Posterior vena cava (tissue), 2 donors: ENCODE measurements at regions of chr5 and their contacts with region 1.

Region 1: DNA sequence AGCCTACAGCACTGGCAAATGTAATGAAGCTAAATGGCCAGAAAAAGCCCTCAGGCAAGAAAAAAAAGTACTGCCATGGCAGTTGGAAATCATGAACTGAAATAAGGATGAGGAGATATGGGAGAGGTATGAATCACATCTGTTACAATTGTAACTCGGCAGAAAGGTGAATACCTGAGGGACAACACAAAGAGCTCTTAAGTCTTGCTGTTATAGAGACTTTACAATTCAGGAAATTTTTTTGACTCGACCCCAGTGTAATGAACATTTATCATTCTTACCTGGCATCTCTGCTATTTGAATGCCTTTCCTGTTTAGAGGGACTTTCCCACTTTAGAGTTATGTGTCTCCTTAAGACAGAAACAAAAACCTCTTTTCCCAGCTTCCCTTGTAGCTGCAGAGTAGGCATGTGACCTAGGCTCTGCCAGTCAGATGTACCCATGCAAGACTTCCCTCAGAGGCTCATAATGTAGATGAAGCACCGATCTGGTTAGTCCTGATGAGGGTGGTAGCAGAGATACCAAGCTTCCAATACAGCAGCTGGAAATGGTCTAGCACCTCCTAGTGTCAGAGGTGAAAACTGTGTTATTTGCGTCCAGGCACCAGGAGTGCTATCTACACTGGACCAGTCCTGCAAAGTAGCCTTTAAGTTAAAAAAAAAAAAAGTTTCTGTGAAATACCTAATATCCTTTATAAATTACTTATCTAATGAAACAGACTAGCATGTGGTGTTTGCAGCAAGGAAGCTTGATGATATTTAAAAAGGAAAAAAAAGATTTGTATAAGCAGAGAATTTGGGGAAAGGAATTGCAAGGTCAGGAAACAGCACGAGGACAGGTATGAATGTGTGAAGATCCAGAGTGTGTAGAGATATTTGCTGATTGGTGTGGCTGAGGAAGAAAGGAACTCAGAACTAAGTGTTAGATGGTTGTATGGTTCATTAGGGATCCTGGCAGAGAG is 146.9 kb upstream of the SLC1A3 start:
- DNase-seq: no peak

Region 2: GRCh38 chr5:36422952-36423351 is 36.5 kb before region 1 on chr5:
- intact Hi-C with region 1: no loop called
- DNase-seq: no peak

Region 3: DNA sequence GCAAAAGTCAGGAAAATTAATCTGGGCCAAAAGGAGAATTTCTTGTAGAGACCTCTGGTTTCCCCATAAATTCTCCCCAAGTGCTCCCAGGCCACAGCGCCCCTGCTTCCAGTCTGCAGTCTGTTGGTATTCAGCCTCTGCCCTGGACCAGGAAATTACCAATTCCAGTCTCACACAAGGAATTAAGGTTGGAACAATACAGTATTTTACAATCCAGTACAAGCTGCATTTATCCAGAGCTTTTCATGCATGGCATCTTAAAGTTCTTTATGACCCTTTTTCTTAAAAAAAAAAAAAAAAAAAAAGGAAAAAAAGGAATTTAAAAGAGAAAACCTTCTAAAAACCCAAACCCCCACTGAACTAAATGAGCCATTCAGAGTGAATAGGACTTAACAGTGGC is 18.2 kb before region 1 on chr5:
- intact Hi-C with region 1: loop called in 1 of 2 experiments (anchors 2 kb)
- DNase-seq: no peak